Transverse colon (tissue), 4 donors: ENCODE measurements at regions of chr11 and their contacts with region 1.

Region 1: GRCh38 chr11:31089117-31089516 is 280.4 kb downstream of the DCDC1 start:
- DNase-seq: no peak
- H3K4me3 ChIP-seq: no peak overlapping the region
- H3K27ac ChIP-seq: no peak overlapping the region
- H3K4me1 ChIP-seq: no peaks in the 10 kb centered on the region
- H3K27me3 ChIP-seq: no peaks in the 10 kb centered on the region
- CTCF ChIP-seq: no peak
- EP300 ChIP-seq: no peak
- POLR2A ChIP-seq: no peak

Region 2: DNA sequence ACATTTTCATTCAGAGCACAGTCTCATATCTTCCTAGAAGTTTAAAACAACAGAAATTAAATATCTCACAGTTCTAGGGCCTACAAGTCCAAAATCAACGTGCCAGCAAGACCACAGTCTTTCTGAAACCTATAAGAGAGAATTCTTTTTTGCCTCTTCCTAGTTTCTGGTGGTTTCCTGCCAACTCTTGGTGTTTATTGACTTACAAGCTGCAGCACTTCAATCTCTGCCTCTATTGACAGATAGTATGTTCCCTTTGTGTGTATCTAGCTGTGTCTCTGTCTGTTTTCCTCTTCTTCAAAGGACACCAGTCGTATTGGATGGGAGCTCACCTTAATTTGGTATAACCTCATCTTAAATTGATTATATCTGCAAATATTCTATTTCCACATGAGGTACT is 67.0 kb before region 1 on chr11:
- in situ Hi-C with region 1: loop called in 1 of 4 experiments (anchors 10 kb)
- intact Hi-C with region 1: no loop called
- DNase-seq: no peak
- H3K4me3 ChIP-seq: no peak overlapping the region
- H3K27ac ChIP-seq: no peak overlapping the region
- H3K4me1 ChIP-seq: no peaks in the 10 kb centered on the region
- H3K27me3 ChIP-seq: no peaks in the 10 kb centered on the region
- CTCF ChIP-seq: no peak
- EP300 ChIP-seq: no peak
- POLR2A ChIP-seq: no peak

Region 3: GRCh38 chr11:31657091-31657490 is 568.0 kb after region 1 on chr11:
- in situ Hi-C with region 1: no loop called
- intact Hi-C with region 1: no loop called
- DNase-seq: no peak
- H3K4me3 ChIP-seq: no peak overlapping the region
- H3K27ac ChIP-seq: no peak overlapping the region
- H3K4me1 ChIP-seq: no peaks in the 10 kb centered on the region
- H3K27me3 ChIP-seq: no peaks in the 10 kb centered on the region
- CTCF ChIP-seq: no peak
- EP300 ChIP-seq: no peak
- POLR2A ChIP-seq: no peak